ENCODE measurements at regions of chr2 and their contacts with region 1.

Region 1: DNA sequence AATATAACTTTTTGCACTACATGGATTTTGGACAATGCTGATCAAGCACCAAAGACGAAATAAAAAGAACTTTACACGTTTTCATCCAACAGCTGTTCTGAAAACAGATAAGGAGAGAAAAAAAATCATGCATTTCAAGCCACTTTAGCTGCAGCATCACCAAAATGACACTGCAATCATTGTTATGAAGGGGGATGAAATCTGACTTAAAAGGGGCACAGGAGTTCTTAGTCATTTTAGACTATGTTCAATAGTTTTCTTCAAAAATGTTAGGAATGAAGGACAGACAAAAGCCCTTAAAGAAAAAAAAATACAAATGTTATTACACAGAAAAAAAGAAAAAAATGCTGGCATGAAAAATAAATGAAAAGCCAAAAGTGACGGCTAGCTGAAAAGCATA is 71.2 kb downstream of the CUL3 start:
- DNase-seq: no peak
- H3K4me3 ChIP-seq: no peak overlapping the region
- H3K27ac ChIP-seq: no peak overlapping the region
- H3K4me1 ChIP-seq: peaks cover under 1% of the 10 kb centered on the region
- H3K27me3 ChIP-seq: no peaks in the 10 kb centered on the region
- CTCF ChIP-seq: no peak
- POLR2A ChIP-seq: no peak

Region 2: DNA sequence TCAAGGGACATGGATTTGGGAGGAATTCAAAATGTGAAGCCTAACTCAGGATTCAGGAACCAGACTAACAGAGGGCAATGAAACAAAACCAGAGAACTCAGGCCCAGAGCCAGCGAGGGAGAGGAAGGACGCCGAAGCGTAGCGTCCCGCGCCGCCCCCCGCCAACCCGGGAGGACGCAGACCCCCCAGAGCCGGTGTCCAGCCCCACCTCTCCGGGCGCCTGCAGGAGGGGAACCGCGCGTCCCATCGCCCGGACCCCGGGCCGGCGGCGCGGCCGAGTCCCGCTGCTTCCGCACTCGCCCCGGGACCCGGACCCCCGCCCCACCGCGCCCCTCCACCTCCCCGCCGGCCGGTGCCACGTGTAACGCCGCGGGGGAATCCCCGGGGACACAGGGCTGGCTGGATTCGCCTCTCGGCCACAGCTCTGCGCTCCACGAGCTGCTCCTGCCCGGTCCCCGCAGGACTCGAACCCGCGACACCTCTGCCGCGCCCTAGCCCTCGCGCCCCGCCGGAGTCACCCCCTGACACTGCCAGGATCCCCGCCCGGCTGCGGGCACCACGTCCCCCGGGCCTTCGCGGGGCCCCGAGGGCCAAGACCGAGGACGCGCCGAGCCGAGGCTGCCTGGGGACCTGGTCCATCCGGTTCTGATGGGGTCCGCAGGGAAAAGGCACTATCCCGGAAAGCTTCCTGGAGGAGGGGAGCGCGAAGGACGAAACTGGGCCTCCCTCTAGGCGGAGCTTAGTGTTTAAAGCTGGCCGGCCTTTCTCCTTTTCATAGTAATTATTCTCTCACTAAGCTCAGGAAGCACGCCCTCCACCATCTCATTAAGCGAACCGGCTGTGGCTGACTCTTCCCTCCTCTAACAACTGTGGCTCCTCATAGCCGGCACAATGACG is 71.7 kb before region 1 on chr2:
- CTCF ChIA-PET with region 1: no interaction called
- POLR2A ChIA-PET with region 1: no interaction called
- dilution Hi-C with region 1: no loop called
- intact Hi-C with region 1: no loop called
- DNase-seq: peak; percentile 61
- H3K4me3 ChIP-seq: peak overlapping the region; percentile 44 to 86 (median 69)
- H3K27ac ChIP-seq: peak overlapping the region; percentile 62
- H3K4me1 ChIP-seq: peaks cover 17% of the 10 kb centered on the region
- H3K27me3 ChIP-seq: no peaks in the 10 kb centered on the region
- CTCF ChIP-seq: no peak
- POLR2A ChIP-seq: peak; percentile 24

Region 3: GRCh38 chr2:224525774-224526173 is 11.8 kb after region 1 on chr2:
- CTCF ChIA-PET with region 1: interaction called, 5 read pairs
- POLR2A ChIA-PET with region 1: no interaction called
- dilution Hi-C with region 1: no loop called
- intact Hi-C with region 1: loop called (anchors 2 kb)
- DNase-seq: no peak
- H3K4me3 ChIP-seq: no peak overlapping the region
- H3K27ac ChIP-seq: no peak overlapping the region
- H3K4me1 ChIP-seq: peaks cover 2% of the 10 kb centered on the region
- H3K27me3 ChIP-seq: no peaks in the 10 kb centered on the region
- CTCF ChIP-seq: no peak
- POLR2A ChIP-seq: no peak

Region 4: GRCh38 chr2:224573724-224574123 is 59.7 kb after region 1 on chr2:
- CTCF ChIA-PET with region 1: no interaction called
- POLR2A ChIA-PET with region 1: no interaction called
- dilution Hi-C with region 1: no loop called
- intact Hi-C with region 1: no loop called
- DNase-seq: no peak
- H3K4me3 ChIP-seq: no peak overlapping the region
- H3K27ac ChIP-seq: no peak overlapping the region
- H3K4me1 ChIP-seq: no peaks in the 10 kb centered on the region
- H3K27me3 ChIP-seq: no peaks in the 10 kb centered on the region
- CTCF ChIP-seq: no peak
- POLR2A ChIP-seq: no peak

Measured in endothelial cell of umbilical vein (primary cell).